MCF 10A (cell line): ENCODE measurements at regions of chr4 and their contacts with region 1.

Region 1: DNA sequence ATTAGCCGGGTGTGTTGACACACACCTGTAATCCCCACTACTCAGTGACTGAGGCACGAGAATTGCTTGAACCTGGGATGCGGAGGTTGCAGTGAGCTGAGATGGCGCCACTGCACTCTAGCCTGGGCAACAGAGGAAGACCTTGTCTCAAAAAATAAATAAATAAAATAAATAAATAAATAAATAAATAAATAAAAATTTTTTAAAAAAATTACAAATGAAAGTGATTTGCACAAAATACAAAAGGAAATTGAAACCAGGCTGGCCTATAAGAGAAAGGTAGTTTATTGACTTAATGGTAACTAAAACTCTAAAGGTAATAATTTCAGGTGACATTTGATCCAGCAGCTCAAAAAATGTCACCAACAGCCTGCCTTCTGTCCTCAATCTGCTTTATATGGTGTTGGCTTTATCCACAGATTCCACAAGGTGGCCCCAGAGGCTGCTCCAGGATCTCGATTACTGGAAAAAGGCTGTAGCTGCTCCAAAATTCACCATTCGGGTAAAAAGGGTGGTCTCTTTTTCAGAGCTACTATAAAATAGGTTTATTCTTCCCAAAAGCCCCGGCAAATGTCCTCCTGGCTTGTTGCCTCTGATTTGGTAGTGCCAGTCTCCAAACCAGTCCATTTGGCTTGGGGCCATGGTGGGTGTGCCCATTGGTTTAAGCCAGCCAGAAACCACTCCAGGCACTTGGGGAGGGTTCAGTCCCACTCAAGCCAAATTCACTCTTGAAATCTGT is 61.4 kb upstream of the TRIM2 start:
- DNase-seq: peak; percentile 79
- H3K4me3 Mint-ChIP-seq: no peak overlapping the region
- H3K27ac Mint-ChIP-seq: no peak overlapping the region
- H3K4me1 Mint-ChIP-seq: peaks cover 17% of the 10 kb centered on the region
- H3K27me3 Mint-ChIP-seq: no peaks in the 10 kb centered on the region
- CTCF ChIP-seq: peak; percentile 95

Region 2: GRCh38 chr4:153153339-153153871 is 10.5 kb after region 1 on chr4:
- CTCF ChIA-PET with region 1: interaction called, 8 read pairs
- POLR2A ChIA-PET with region 1: interaction called, 3 read pairs
- intact Hi-C with region 1: loop called (anchors 1 kb)
- DNase-seq: peak; percentile 52
- H3K4me3 Mint-ChIP-seq: peak overlapping the region; percentile 81
- H3K27ac Mint-ChIP-seq: no peak overlapping the region
- H3K4me1 Mint-ChIP-seq: no peaks in the 10 kb centered on the region
- H3K27me3 Mint-ChIP-seq: peaks cover 13% of the 10 kb centered on the region
- CTCF ChIP-seq: no peak

Region 3: DNA sequence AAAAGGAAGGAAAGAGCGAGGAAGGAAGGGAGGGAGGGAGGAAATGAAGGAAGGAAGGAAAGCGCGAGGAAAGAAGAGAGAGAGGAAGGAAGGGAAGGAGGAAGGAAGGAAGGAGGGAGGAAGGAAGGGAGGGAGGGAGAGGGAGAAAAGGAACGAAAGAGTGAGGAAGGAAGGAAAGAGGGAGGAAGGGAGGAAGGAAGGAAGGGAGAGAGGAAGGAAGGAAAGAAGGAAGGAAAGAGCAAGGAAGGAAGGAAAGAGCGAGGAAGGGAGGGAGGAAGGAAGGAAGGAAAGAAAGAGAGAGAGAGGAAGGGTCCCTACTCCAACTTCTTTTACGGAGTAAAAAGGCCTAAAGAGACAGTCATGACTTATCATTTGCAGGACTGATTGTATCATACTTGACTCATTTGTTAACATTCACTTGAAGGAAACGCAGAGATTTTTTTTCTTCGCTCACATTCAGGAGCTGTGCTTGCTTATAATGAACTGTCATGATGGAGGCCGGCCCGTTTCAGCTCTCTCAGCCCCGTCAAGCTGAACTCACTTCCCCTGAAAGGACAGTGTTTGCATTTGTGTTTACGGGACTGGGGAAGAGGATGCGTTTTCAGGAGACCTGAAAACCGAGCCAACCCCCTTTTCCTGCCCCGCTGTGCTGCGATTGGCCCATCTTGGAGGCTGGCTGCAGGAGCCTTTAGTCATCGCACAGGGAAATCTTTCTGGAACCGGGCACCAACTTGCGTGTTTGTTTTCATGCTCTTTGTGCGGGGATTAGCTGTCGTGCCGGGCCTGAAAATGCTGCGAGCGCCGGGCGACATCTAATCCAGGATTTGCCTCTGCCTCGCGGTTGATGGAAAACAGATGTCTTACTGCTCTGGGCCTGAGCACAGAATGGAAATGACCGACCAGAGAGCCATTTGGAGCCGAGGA is 79.2 kb after region 1 on chr4:
- CTCF ChIA-PET with region 1: interaction called, 3 read pairs
- POLR2A ChIA-PET with region 1: no interaction called
- intact Hi-C with region 1: loop called (anchors 2 kb)
- DNase-seq: peak; percentile 80
- H3K4me3 Mint-ChIP-seq: peak overlapping the region; percentile 87
- H3K27ac Mint-ChIP-seq: peak overlapping the region; percentile 85
- H3K4me1 Mint-ChIP-seq: peaks cover 20% of the 10 kb centered on the region
- H3K27me3 Mint-ChIP-seq: no peaks in the 10 kb centered on the region
- CTCF ChIP-seq: no peak

Region 4: DNA sequence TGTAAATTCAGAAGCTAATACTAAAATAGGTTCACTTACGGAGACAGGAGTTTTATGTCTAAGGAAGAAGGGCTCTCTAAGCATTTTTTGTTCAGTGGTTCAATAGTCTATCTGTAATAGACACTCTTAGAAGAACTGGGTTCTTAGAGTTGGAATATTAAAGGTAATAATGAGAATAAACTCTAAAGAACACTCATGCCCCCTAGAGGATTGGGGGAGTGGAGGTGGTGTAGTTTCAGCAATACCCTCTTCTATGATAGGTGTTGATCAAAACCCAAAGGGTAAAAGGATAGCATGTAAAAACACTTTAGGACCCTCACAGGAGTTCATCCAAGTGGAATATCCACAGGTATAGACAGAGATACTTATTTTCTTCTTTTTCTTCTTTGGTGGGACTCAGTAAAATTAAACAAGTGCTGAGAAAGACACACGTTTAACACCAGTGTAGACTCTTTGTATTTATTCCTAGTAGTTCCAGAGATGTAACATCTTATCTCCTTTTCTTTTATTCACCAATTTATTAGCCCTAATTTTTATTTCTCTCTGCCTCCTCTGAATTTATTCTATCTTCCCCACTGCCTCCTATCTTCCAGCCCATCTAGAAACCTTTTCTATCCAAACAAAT is 175.9 kb after region 1 on chr4:
- CTCF ChIA-PET with region 1: interaction called, 36 read pairs
- POLR2A ChIA-PET with region 1: interaction called, 3 read pairs
- intact Hi-C with region 1: loop called (anchors 1 kb)
- DNase-seq: peak; percentile 68
- H3K4me3 Mint-ChIP-seq: no peak overlapping the region
- H3K27ac Mint-ChIP-seq: no peak overlapping the region
- H3K4me1 Mint-ChIP-seq: no peaks in the 10 kb centered on the region
- H3K27me3 Mint-ChIP-seq: no peaks in the 10 kb centered on the region
- CTCF ChIP-seq: peak; percentile 57

Region 5: DNA sequence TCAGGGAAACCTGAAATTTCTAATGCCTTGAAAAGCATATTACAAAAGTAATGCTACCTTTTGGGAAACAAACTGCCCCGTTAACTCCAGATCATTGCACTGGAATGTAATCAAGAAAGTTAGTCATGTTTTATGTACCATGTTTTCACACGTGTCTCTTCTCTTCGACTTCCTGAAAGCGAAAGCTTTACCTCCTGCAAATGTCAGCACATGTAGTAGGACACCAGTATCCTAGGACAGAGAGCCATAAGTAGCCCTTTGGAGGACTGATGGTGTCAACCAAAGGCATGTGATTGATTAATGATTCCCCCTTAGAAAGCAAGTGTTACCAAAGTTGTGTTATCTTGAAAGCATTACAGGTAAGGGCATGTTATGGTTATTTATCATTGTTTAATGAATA is 192.8 kb after region 1 on chr4:
- CTCF ChIA-PET with region 1: interaction called, 11 read pairs
- POLR2A ChIA-PET with region 1: no interaction called
- intact Hi-C with region 1: no loop called
- DNase-seq: peak; percentile 40
- H3K4me3 Mint-ChIP-seq: no peak overlapping the region
- H3K27ac Mint-ChIP-seq: peak overlapping the region; percentile 36
- H3K4me1 Mint-ChIP-seq: peaks cover 14% of the 10 kb centered on the region
- H3K27me3 Mint-ChIP-seq: no peaks in the 10 kb centered on the region
- CTCF ChIP-seq: no peak

Region 6: GRCh38 chr4:153573881-153574802 is 431.3 kb after region 1 on chr4:
- CTCF ChIA-PET with region 1: interaction called, 12 read pairs
- POLR2A ChIA-PET with region 1: no interaction called
- intact Hi-C with region 1: loop called (anchors 1 kb)
- DNase-seq: peak; percentile 70
- H3K4me3 Mint-ChIP-seq: no peak overlapping the region
- H3K27ac Mint-ChIP-seq: no peak overlapping the region
- H3K4me1 Mint-ChIP-seq: no peaks in the 10 kb centered on the region
- H3K27me3 Mint-ChIP-seq: no peaks in the 10 kb centered on the region
- CTCF ChIP-seq: peak; percentile 73

Region 7: DNA sequence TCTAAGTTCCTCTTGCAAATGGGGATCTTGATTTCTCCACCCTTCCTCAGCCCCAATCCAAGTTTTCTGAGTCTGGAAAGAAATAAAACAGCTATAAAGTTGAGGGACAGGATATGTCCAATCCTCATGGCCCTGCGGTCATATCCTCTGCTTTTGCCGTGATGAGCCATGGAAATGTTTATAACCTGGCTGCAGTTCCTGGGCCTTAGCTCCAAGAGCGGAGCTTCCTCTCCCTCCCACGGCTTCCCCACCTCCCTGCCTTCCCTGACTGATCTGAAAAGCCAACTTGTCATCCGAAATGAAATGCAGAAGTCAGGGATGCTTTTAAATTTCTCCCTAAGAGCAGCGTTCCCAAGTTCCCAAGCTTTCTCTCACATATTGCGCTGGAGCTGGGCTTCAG is 867.5 kb after region 1 on chr4:
- CTCF ChIA-PET with region 1: no interaction called
- POLR2A ChIA-PET with region 1: no interaction called
- intact Hi-C with region 1: no loop called
- DNase-seq: no peak
- H3K4me3 Mint-ChIP-seq: no peak overlapping the region
- H3K27ac Mint-ChIP-seq: no peak overlapping the region
- H3K4me1 Mint-ChIP-seq: peaks cover 11% of the 10 kb centered on the region
- H3K27me3 Mint-ChIP-seq: no peaks in the 10 kb centered on the region
- CTCF ChIP-seq: no peak